Right ventricle myocardium inferior (tissue), 1 donor: ENCODE measurements at regions of chr19 and their contacts with region 1.

Region 1: GRCh38 chr19:1275260-1275975 is at the start of gene FAM174C:
- DNase-seq: peak; percentile 97
- ATAC-seq: peak; percentile 88
- total RNA-seq, gene FAM174C: 13.1 TPM

Region 2: DNA sequence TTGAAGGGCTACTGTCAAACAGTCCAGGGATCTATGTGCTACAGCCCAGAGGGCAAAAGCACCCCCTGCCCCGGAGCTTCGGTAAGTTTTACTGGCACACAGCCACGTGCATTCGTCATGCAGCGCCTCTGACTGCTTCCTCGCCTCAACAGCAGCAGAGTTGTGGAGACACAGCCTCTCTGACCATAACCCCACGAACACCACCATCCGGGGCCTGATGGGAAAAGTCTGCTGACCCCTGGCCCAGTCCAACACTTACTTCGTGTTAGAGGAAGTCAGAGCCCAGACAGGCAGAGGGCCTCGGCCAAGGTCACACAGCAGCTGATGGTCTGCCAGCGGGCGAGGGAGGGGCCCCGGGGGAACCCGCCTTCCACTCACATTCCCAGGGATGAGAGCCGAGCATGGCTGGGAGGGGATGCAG is 42.8 kb before region 1 on chr19:
- intact Hi-C with region 1: no loop called
- DNase-seq: no peak
- ATAC-seq: no peak

Region 3: DNA sequence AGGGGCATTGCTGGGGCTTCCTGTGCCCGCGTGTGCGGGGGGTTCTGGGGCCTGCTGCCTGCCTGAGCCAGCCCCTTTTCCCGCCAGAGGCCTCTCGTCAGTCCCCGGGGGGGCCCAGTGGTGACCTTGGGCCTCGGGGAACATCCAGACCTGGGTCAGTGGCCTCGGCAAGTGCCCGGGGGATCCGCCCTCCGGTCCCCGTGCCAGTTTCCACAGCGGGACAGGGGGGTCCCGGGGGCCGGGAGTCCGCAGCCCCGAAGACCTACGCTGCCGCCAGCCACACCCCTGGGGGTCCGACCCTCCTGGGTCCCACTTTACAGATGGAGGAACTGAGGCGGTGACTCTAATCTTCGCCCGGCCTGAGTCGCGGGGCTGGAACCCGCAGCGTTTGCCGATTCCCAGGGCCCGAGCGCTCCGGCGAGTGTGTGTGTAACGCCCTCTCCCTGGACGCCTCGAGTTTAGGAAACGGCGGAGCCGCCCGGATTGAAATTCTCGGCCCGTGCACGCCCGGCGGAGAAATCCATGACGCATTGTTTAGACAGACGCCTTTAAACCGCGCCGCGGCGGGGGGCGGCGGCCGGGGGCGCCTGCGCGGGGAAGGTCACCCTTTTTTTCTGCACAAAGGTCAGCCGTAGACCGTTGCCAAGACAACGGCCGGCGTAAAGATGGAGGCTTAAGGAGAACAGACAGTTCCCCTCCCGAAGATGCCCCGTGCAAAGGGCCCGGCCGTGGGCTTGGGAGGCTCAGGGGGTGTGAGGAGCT is 49.6 kb after region 1 on chr19:
- intact Hi-C with region 1: no loop called
- DNase-seq: no peak
- ATAC-seq: peak; percentile 60

Region 4: DNA sequence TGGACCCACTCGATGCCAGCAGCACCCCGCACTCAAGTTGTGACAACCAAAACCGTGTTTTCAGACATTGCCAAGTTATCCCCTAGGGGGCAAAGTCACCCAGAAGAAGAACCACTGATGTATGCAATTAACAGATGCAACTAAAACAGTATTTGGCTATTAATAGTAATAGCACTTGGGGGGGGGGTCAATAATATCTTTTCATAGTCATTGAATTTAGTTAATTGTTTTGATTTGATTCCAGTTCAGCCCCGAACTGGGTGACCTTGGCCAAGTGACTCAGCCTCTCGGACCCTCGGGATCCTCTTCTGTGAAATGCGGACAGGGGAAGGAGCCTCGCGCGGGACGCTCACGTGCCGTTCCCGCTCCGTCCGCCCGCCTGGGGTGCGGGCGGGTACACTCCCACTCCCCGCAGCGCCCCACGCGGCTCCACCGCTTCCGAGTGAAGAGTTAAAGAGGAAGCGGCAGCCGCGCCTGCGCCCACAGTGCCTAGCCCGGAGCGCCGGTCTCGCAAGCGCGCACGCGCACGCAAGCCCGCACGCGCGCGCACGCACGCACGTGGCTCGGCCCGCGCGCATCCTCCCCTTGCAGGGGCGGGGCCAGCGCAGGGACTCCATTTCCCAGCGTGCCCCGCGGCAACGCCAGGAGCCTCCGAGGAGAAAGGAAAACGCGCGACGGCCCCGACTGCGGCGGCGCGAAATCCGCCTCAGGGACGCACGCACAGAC is 131.5 kb after region 1 on chr19:
- intact Hi-C with region 1: loop called (anchors 5 kb)
- DNase-seq: peak; percentile 100
- ATAC-seq: peak; percentile 93

Region 5: GRCh38 chr19:1507763-1508509 is 232.5 kb after region 1 on chr19:
- intact Hi-C with region 1: loop called (anchors 5 kb)
- DNase-seq: peak; percentile 93
- ATAC-seq: peak; percentile 92